CD8-positive, alpha-beta T cell (primary cell): ENCODE measurements at regions of chr7 and their contacts with region 1.

Region 1: GRCh38 chr7:144796919-144797318 is 38.9 kb downstream of the TPK1 start:
- DNase-seq: no peak
- ATAC-seq: no peak
- H3K4me3 ChIP-seq: no peak overlapping the region
- H3K4me3 Mint-ChIP-seq: no peak overlapping the region
- H3K27ac ChIP-seq: no peak overlapping the region
- H3K27ac Mint-ChIP-seq: no peak overlapping the region
- H3K4me1 ChIP-seq: no peaks in the 10 kb centered on the region
- H3K4me1 Mint-ChIP-seq: peaks cover 35% of the 10 kb centered on the region
- H3K27me3 ChIP-seq: no peaks in the 10 kb centered on the region
- H3K27me3 Mint-ChIP-seq: no peaks in the 10 kb centered on the region
- CTCF ChIP-seq: no peak

Region 2: GRCh38 chr7:144682581-144683280 is 114.2 kb before region 1 on chr7:
- CTCF ChIA-PET with region 1: no interaction called
- POLR2A ChIA-PET with region 1: no interaction called
- intact Hi-C with region 1: no loop called
- DNase-seq: no peak
- ATAC-seq: no peak
- H3K4me3 ChIP-seq: no peak overlapping the region
- H3K4me3 Mint-ChIP-seq: no peak overlapping the region
- H3K27ac ChIP-seq: no peak overlapping the region
- H3K27ac Mint-ChIP-seq: no peak overlapping the region
- H3K4me1 ChIP-seq: no peaks in the 10 kb centered on the region
- H3K4me1 Mint-ChIP-seq: no peaks in the 10 kb centered on the region
- H3K27me3 ChIP-seq: no peaks in the 10 kb centered on the region
- H3K27me3 Mint-ChIP-seq: no peaks in the 10 kb centered on the region
- CTCF ChIP-seq: no peak

Region 3: GRCh38 chr7:144848078-144848477 is 51.2 kb after region 1 on chr7:
- CTCF ChIA-PET with region 1: no interaction called
- POLR2A ChIA-PET with region 1: no interaction called
- intact Hi-C with region 1: loop called in 1 of 2 experiments (anchors 5 kb)
- DNase-seq: no peak
- ATAC-seq: no peak
- H3K4me3 ChIP-seq: no peak overlapping the region
- H3K4me3 Mint-ChIP-seq: no peak overlapping the region
- H3K27ac ChIP-seq: no peak overlapping the region
- H3K27ac Mint-ChIP-seq: no peak overlapping the region
- H3K4me1 ChIP-seq: no peaks in the 10 kb centered on the region
- H3K4me1 Mint-ChIP-seq: no peaks in the 10 kb centered on the region
- H3K27me3 ChIP-seq: no peaks in the 10 kb centered on the region
- H3K27me3 Mint-ChIP-seq: no peaks in the 10 kb centered on the region
- CTCF ChIP-seq: no peak